B cell (primary cell): ENCODE measurements at regions of chr6 and their contacts with region 1.

Region 1: GRCh38 chr6:14984519-14984853 is 261.4 kb upstream of the JARID2 start:
- DNase-seq: no peak
- ATAC-seq: no peak
- H3K4me3 ChIP-seq: no peak overlapping the region
- H3K4me3 Mint-ChIP-seq: no peak overlapping the region
- H3K27ac ChIP-seq: no peak overlapping the region
- H3K27ac Mint-ChIP-seq: no peak overlapping the region
- H3K4me1 ChIP-seq: peaks cover 0 to 4% of the 10 kb centered on the region in 2 donors
- H3K4me1 Mint-ChIP-seq: peaks cover 4% of the 10 kb centered on the region
- H3K27me3 ChIP-seq: peaks cover 0 to 5% (median 2%) of the 10 kb centered on the region in 4 experiments
- H3K27me3 Mint-ChIP-seq: peaks cover 16% of the 10 kb centered on the region
- CTCF ChIP-seq: no peak

Region 2: DNA sequence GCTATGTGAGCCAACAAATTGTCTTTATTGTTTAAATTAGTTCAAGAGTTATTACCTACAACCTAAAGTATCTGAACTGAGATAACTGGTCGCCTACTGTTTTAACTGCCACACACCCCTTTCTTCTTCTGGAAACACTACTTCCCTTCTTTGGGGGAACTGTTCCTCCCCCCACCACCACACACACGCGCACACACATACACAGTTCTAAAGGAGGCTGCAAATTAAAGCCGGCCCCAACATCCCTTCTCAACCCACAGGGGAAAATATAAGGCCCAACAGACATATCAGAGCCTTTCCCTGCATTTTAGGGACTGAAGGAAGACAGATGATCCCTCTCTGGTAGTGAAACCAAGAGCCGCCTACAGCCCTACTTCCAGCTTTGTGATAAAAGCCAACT is 86.7 kb before region 1 on chr6:
- CTCF ChIA-PET with region 1: no interaction called
- POLR2A ChIA-PET with region 1: no interaction called
- intact Hi-C with region 1: no loop called
- DNase-seq: peak; percentile 27
- ATAC-seq: peak; percentile 24
- H3K4me3 ChIP-seq: no peak overlapping the region
- H3K4me3 Mint-ChIP-seq: no peak overlapping the region
- H3K27ac ChIP-seq: no peak overlapping the region
- H3K27ac Mint-ChIP-seq: peak overlapping the region; percentile 1
- H3K4me1 ChIP-seq: peaks cover 13 to 14% of the 10 kb centered on the region in 2 donors
- H3K4me1 Mint-ChIP-seq: peaks cover 19% of the 10 kb centered on the region
- H3K27me3 ChIP-seq: no peaks in the 10 kb centered on the region
- H3K27me3 Mint-ChIP-seq: no peaks in the 10 kb centered on the region
- CTCF ChIP-seq: no peak

Region 3: GRCh38 chr6:15001326-15001910 is 16.9 kb after region 1 on chr6:
- CTCF ChIA-PET with region 1: no interaction called
- POLR2A ChIA-PET with region 1: interaction called, 14 read pairs
- intact Hi-C with region 1: no loop called
- DNase-seq: no peak
- ATAC-seq: no peak
- H3K4me3 ChIP-seq: no peak overlapping the region
- H3K4me3 Mint-ChIP-seq: no peak overlapping the region
- H3K27ac ChIP-seq: no peak overlapping the region
- H3K27ac Mint-ChIP-seq: no peak overlapping the region
- H3K4me1 ChIP-seq: no peaks in the 10 kb centered on the region
- H3K4me1 Mint-ChIP-seq: no peaks in the 10 kb centered on the region
- H3K27me3 ChIP-seq: no peaks in the 10 kb centered on the region
- H3K27me3 Mint-ChIP-seq: no peaks in the 10 kb centered on the region
- CTCF ChIP-seq: no peak